ENCODE measurements at regions of chr14 and their contacts with region 1.

Region 1: GRCh38 chr14:95993768-95994592 is 45.2 kb upstream of the C14orf132 start:
- DNase-seq: no peak
- ATAC-seq: no peak

Region 2: DNA sequence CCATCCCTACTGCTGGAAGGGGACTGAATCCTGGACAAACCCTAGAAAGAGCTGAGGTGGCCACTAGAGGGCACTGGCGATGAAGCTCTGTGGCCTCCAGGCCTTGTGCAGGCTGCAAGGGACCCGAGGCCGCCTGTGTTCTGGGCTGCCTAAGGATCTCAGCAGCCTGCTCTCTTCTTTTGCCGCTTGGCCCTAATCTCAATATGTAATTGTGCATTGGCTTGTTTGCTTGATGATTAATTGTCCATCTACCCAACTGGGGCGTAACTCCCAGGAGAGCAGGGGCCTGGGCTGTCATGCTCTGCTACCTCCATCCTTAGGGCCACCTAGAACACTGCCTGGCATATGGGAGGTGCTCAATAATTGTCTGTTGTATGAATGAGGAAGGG is 551.4 kb before region 1 on chr14:
- intact Hi-C with region 1: loop called (anchors 10 kb)
- DNase-seq: peak; percentile 89
- ATAC-seq: peak; percentile 94

Region 3: GRCh38 chr14:95561001-95561412 is 433.0 kb before region 1 on chr14:
- intact Hi-C with region 1: loop called (anchors 1 kb)
- DNase-seq: peak; percentile 81
- ATAC-seq: peak; percentile 76

Region 4: DNA sequence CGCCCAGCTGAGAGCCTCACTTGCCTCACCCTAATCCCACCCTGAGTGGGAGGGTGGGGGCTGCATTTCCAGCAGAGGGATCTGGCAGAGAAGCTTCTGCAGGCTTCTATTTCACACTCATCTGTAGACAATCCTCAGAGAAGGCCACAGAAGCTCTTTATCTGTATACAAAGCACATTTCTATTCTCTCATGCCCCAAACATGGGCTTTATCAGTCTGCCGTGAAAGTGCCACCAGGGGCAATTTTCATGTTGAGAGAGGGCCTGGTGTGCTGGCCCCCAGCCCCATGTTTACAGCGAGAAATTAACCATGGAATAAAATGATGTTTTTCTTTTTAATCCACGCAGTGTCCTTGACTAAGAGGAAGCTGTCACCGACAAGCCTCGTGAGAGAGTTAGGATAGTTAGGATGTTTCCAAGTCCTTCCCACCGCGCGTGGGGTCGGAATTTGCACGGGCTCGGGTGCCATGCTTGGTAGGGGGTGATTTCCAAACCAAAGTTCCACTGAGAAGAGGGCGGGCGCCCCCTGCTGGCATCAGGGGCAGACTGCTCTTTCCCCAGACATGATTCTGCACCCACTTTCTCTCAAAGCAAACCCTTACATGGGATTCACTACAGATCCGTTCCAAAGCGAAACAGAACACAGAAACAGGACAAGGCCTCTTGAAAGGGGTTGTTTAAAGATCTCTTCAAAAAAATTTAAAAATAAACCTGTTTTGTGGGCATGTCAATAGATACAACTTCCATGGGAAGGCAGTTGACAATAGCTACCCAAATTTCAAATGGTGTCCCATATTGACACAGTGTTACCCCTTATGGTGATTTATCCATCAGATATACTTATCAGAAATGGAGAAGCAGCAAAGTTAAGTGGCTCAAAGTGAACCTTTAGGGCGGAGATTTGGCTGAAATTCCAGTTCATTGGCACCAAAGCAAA is 281.5 kb after region 1 on chr14:
- intact Hi-C with region 1: loop called (anchors 5 kb)
- DNase-seq: peak; percentile 79
- ATAC-seq: peak; percentile 38

Measured in Right ventricle myocardium inferior (tissue), 1 donor.